A549 (cell line): ENCODE measurements at regions of chr6 and their contacts with region 1.

Region 1: DNA sequence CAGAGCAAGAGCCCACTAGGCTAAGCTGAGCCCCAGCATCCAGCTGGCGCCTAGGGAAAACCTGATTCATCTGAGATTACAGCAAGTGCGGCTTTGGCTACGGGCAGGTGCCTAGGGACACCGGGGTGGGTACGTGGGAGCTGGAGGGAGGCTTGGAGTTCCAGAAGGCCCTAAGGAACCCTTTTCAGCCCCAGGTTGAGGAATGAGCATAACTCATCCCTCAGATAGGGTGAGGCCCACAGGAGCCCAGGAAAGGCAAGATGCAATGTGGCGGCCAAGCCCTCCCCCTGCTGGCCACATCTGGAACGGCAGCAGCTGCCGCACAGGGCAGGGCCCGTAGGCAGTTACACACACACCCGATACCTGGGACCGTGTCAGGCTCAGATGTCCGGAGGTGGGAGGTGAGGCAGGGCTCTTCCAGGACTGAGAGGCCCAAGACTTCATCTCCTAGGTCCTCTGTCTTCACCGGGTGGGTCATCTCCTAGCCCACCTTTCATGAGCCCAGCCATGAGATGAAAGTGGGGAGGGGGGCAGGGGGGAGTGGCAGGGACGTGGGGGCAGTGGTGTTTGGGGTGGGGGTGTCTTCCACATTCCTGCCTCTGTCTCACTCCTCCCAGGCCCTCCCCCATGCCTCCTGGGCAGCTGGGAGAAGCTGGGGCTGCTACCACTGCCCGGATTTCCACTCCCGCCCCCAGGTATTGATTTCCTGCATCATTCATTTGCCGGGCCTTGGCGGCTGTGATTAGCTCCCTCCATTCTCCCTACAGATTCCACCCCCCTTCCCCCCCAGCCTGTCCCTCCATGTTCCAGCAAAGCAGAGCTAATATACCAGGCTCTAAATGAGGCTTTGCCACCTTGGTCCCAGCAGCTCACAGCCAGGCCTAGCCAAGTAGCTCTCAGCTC is 5.5 kb downstream of the MDGA1 start:
- DNase-seq: peak; percentile 58 to 69
- ATAC-seq: peak; percentile 79 to 91
- H3K4me3 ChIP-seq: no peak overlapping the region
- H3K27ac ChIP-seq: peak overlapping the region in 1 of 2 experiments; percentile 61; a peak in 2 of 6 replicates
- H3K4me1 ChIP-seq: peaks cover 20% of the 10 kb centered on the region
- CTCF ChIP-seq: peak; percentile 78
- EP300 ChIP-seq: no peak
- POLR2A ChIP-seq: no peak
- RAD21 ChIP-seq: peak; percentile 94

Region 2: DNA sequence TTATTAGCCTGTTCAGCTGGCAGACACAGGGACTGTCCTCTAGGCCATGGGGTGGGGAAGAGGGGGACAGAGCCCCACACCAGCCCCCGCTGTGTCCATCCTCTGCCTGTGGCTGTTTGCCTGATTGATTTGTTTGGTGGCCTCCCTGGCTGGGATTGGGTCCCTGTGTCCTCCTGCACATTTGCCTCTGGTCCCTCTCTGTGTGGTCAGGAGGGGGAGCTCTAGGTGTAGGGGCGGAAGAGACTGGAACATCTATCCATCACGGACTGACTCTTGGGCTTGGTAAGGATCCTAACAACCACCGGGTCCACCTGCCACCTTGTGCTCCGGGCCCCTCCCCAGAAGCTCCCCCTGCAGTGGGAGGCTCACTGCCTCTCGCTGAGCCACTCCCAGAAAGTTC is 154.0 kb before region 1 on chr6:
- CTCF ChIA-PET with region 1: interaction called, 72 read pairs
- POLR2A ChIA-PET with region 1: no interaction called
- DNase-seq: peak; percentile 43 to 60
- ATAC-seq: peak; percentile 80 to 93; a peak in 5 of 6 replicates
- H3K4me3 ChIP-seq: no peak overlapping the region
- H3K27ac ChIP-seq: no peak overlapping the region
- H3K4me1 ChIP-seq: no peaks in the 10 kb centered on the region
- CTCF ChIP-seq: peak; percentile 45; the same call in 2 of the 3 replicates
- EP300 ChIP-seq: no peak
- POLR2A ChIP-seq: no peak
- RAD21 ChIP-seq: peak; percentile 63 to 80

Region 3: GRCh38 chr6:37566111-37566949 is 125.8 kb before region 1 on chr6:
- CTCF ChIA-PET with region 1: interaction called, 22 read pairs
- POLR2A ChIA-PET with region 1: no interaction called
- DNase-seq: peak in 1 of 2 experiments; percentile 57
- ATAC-seq: peak; percentile 78 to 97; a peak in 5 of 6 replicates
- H3K4me3 ChIP-seq: no peak overlapping the region
- H3K27ac ChIP-seq: no peak overlapping the region; a peak in 1 of 6 replicates
- H3K4me1 ChIP-seq: no peaks in the 10 kb centered on the region
- CTCF ChIP-seq: peak; percentile 77
- EP300 ChIP-seq: no peak
- POLR2A ChIP-seq: no peak
- RAD21 ChIP-seq: peak; percentile 78 to 82

Region 4: GRCh38 chr6:37603284-37603683 is 88.9 kb before region 1 on chr6:
- CTCF ChIA-PET with region 1: interaction called, 10 read pairs
- POLR2A ChIA-PET with region 1: no interaction called
- DNase-seq: no peak
- ATAC-seq: no peak
- H3K4me3 ChIP-seq: no peak overlapping the region
- H3K27ac ChIP-seq: no peak overlapping the region
- H3K4me1 ChIP-seq: no peaks in the 10 kb centered on the region
- CTCF ChIP-seq: no peak
- EP300 ChIP-seq: no peak
- POLR2A ChIP-seq: no peak
- RAD21 ChIP-seq: no peak

Region 5: GRCh38 chr6:37630281-37630799 is 61.8 kb before region 1 on chr6:
- CTCF ChIA-PET with region 1: interaction called, 15 read pairs
- POLR2A ChIA-PET with region 1: no interaction called
- DNase-seq: peak; percentile 52 to 87
- ATAC-seq: peak; percentile 79 to 91
- H3K4me3 ChIP-seq: no peak overlapping the region
- H3K27ac ChIP-seq: peak overlapping the region; percentile 82 to 85
- H3K4me1 ChIP-seq: peaks cover 38% of the 10 kb centered on the region
- CTCF ChIP-seq: no peak
- EP300 ChIP-seq: peak in 1 of 2 experiments; percentile 19; a peak in 3 of 5 replicates
- POLR2A ChIP-seq: no peak
- RAD21 ChIP-seq: no peak